Cardiac septum (tissue), 1 donor: ENCODE measurements at regions of chr18 and their contacts with region 1.

Region 1: DNA sequence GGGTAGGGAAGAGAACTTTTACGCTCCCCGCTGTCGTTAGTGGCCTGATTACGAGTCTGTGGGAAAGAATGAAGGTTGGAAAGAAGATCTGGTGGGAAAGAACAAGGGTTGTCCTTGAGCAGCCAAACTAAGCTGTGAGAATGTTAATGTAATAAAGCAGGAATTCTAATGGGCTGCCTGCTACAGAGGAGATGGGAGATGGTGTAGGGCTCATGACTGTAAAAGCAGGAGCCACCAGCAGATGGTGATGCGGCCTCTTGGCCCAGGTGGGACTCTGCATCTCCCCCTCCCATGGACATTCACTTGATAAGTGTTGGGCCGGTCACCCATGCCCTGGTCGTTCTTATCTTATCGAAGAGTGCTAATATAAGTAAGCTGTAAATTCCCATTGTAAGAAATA is 150.0 kb downstream of the NEDD4L start:
- DNase-seq: no peak

Region 2: GRCh38 chr18:57921708-57922107 is 272.3 kb before region 1 on chr18:
- intact Hi-C with region 1: no loop called
- DNase-seq: no peak

Region 3: DNA sequence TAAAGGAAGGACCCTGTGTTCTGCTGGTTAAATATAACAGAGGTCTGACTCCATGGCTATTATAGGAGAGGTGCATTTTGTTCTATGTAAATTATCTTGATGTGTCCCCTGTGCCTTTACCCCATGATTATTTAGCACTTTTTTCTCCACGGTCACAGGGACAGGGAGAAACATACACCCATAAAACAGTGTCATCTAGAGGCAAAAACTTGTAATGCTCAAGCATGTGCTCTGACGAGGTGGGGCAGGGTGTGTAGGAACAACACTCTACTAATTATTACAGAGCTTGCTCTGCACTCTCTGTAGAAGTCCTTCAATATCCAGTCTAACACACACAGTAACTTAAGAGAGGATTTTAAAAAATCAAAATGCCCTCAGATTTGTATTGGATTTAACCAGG is 37.9 kb after region 1 on chr18:
- intact Hi-C with region 1: loop called (anchors 5 kb)
- DNase-seq: no peak

Region 4: GRCh38 chr18:58288922-58289797 is 95.1 kb after region 1 on chr18:
- intact Hi-C with region 1: no loop called
- DNase-seq: no peak